ENCODE measurements at regions of chr11 and their contacts with region 1.

Region 1: DNA sequence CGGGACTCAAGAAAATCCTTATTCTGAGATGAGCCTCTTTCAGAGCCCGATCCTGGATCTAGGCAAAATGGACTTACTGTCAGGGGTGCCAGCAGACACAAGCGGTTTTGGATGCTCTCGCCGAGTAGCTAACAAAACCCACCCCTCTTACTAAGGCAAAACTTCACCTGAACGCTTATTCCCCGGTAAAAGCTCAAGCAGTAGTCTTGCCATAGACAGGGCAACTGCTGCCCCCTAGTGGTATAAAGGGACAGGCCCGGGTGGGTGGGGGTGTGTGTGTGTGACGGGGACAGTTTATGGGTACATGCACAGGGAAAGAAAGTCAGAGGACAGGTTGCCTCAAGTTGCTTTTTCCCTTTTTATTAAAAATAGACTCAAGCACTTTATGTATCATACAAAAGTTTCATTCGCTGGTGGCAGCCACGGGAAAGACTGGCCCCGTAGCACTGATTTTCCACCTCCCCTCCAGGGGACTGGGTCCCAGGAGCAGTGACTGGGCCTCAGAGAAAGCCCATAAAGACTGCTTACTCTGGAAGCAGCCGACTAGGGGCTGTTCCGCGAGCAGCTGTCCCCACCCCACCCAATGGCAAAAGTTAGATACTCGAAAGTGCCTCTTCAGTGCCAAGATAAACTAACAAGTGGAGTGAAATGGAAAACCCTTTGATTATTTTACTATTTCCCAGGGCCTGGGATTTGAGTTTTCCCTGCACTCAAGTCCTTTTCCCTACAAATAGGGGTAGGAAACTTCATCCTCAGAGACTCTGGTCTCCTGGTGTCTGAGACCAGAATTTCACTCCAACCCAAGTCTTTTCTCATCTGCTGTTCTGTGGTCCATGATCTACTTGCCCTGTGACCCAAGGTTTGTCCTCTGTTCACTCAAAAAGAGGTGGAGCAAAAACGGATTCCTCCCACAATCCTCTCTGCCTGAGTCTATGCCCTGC is 4.7 kb downstream of the YPEL4 start:
- DNase-seq: peak; percentile 87
- H3K4me3 ChIP-seq: no peak overlapping the region
- H3K27ac ChIP-seq: peak overlapping the region; percentile 13 to 46
- H3K4me1 ChIP-seq: peaks cover 0 to 67% (median 49%) of the 10 kb centered on the region in 4 donors
- H3K27me3 ChIP-seq: peaks cover 0 to 39% of the 10 kb centered on the region in 2 donors
- CTCF ChIP-seq: peak; percentile 72 to 90

Region 2: DNA sequence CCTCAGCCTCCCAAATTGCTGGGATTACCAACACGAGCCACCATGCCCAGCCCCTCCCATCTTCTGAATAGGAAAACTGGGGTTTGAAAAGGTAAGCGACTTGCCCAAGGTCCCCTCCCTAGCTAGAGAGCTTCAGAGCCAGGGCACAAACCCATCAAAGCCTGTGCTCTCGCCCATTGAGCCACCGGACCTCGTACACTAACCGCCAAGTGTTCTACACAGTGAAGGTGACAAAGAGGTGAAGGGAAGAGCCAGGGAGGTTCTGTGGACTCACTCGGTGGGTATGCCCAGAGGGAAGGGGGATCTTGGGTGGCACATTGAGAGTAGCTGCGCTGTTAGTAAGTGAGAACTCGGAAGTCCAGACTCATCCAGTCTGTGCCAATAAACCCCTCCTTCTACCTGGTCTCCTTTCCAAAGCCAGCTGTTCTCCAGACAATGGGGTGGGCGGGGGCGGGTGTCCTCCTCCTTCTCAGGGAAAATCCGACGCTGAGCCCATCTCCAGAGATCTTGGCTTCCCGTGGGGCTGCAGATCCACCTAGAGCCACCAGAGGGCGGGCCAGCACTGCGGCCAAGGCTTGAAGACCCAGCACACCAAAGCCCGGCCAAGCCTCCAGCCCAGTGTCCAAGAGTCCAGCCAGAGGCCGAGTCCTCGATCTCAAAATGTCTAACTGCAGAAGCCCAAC is 187.9 kb before region 1 on chr11:
- intact Hi-C with region 1: loop called (anchors 10 kb)
- DNase-seq: peak; percentile 92 to 94
- H3K4me3 ChIP-seq: no peak overlapping the region
- H3K27ac ChIP-seq: no peak overlapping the region
- H3K4me1 ChIP-seq: peaks cover 0 to 43% (median 38%) of the 10 kb centered on the region in 4 donors
- H3K27me3 ChIP-seq: peaks cover 0 to 63% of the 10 kb centered on the region in 2 donors
- CTCF ChIP-seq: peak; percentile 97 to 98

Region 3: GRCh38 chr11:57499413-57499982 is 145.5 kb before region 1 on chr11:
- intact Hi-C with region 1: loop called (anchors 10 kb)
- DNase-seq: peak; percentile 98 to 99
- H3K4me3 ChIP-seq: peak overlapping the region; percentile 24 to 47
- H3K27ac ChIP-seq: peak overlapping the region; percentile 79 to 82
- H3K4me1 ChIP-seq: peaks cover 11 to 19% (median 14%) of the 10 kb centered on the region in 4 donors
- H3K27me3 ChIP-seq: no peaks in the 10 kb centered on the region
- CTCF ChIP-seq: peak in 1 of 2 experiments; percentile 28

Region 4: GRCh38 chr11:57567515-57568329 is 77.3 kb before region 1 on chr11 and contains the start of gene UBE2L6:
- intact Hi-C with region 1: loop called (anchors 2 kb)
- DNase-seq: peak; percentile 33 to 71
- H3K4me3 ChIP-seq: peak within 1 kb of the TSS; percentile 72 to 83
- H3K27ac ChIP-seq: peak within 1 kb of the TSS; percentile 67 to 79
- H3K4me1 ChIP-seq: peaks cover 0 to 20% (median 11%) of the 10 kb centered on the region in 4 donors
- H3K27me3 ChIP-seq: no peaks in the 10 kb centered on the region
- CTCF ChIP-seq: peak in 1 of 2 experiments; percentile 91